IMR-90 (cell line): ENCODE measurements at regions of chr7 and their contacts with region 1.

Region 1: DNA sequence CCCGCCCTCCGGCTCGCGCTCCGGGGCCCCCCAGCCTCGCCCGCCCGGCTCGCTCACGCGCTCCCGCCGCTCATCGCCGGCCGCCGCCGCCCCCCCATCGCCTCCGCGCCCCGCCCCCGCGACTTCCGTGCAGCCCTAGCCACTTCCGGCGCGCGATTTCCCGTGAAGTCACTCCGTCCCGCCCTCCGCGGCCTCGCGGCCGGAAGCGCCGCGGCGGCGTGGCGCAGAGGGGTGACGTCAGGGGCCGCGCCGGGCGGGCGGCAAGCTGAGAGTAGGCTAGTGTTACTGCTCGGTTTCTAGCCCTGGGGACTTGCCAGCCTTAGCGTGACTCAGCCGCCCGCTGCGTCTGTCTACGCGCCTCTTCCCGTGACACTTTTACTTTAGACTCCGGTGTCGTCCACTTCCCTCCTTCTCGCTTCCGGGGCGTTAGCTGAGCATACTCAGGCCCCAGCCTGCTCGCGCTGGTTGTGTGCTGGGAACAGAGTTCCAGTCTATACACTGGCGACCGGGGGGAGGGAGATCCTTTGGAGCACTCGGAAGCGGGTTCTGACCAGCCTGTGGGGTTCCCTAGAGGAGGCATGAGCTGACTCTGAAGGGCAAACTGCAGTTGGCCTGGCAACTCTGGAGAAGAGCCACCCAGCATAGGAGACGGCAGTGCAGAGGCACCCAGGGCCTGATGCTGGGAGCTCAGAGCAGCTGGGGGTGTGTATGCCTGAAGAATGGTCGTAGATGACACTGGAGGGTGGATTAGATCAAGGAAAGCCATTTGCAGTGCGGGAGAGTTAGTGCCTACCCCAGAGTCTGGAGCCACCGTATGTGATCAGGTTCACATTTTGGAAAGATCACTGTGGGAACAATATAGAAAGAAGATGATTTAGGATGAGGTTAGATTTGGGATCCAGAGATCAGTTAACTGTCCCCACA is at the start of gene PURB:
- DNase-seq: peak; percentile 98
- ATAC-seq: peak; percentile 85
- H3K4me3 ChIP-seq: peak within 1 kb of the TSS; percentile 94
- H3K27ac ChIP-seq: peak within 1 kb of the TSS; percentile 91
- H3K4me1 ChIP-seq: peaks cover 7% of the 10 kb centered on the region; the same call in 1 of the 2 replicates
- H3K27me3 ChIP-seq: no peaks in the 10 kb centered on the region
- CTCF ChIP-seq: no peak
- POLR2A ChIP-seq: peak; percentile 90
- RAD21 ChIP-seq: no peak
- total RNA-seq, gene PURB: 8.8 and 15.3 TPM in 2 replicates

Region 2: GRCh38 chr7:44606450-44607254 is 279.0 kb before region 1 on chr7 and contains the start of gene OGDH:
- CTCF ChIA-PET with region 1: no interaction called
- POLR2A ChIA-PET with region 1: no interaction called
- dilution Hi-C with region 1: no loop called
- in situ Hi-C with region 1: no loop called
- intact Hi-C with region 1: loop called (anchors 1 kb)
- DNase-seq: peak; percentile 99
- ATAC-seq: peak; percentile 99
- H3K4me3 ChIP-seq: peak within 1 kb of the TSS; percentile 85
- H3K27ac ChIP-seq: peak within 1 kb of the TSS; percentile 85
- H3K4me1 ChIP-seq: no peaks in the 10 kb centered on the region
- H3K27me3 ChIP-seq: no peaks in the 10 kb centered on the region
- CTCF ChIP-seq: no peak
- POLR2A ChIP-seq: peak; percentile 91
- RAD21 ChIP-seq: no peak
- total RNA-seq, gene OGDH: 52.8 and 56.5 TPM in 2 replicates

Region 3: DNA sequence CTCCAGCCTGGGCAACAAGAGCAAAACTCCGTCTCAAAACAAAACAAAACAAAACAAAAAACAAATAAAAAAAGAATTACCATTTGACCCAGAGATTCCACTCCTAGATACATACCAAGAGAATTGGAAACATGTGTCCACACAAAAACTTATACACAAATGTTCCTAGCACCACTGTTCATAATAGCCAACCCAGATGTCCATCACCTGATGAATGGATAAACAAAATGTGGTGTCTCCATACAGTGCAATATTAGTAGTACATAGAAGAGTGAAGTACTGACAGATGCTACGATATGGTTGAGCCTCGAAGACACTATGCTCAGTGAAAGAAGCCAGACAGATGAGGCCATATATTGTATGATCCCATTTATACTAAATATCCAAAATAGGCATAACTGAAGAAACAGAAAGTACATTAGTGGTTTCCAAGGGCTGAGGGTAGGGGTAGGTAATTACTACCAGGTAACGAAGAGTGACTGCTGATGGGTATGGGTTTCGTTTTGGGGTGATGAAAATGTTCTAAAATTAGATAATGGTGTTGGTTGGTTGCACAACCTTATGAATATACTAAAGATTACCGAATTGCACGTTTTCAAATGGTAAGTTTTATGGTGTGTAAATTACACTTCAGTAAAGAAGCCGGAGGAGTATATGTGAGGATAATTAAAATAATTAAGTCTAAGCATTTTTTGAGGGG is 73.1 kb after region 1 on chr7:
- CTCF ChIA-PET with region 1: no interaction called
- POLR2A ChIA-PET with region 1: no interaction called
- dilution Hi-C with region 1: no loop called
- in situ Hi-C with region 1: no loop called
- intact Hi-C with region 1: no loop called
- DNase-seq: no peak
- ATAC-seq: no peak
- H3K4me3 ChIP-seq: no peak overlapping the region
- H3K27ac ChIP-seq: no peak overlapping the region
- H3K4me1 ChIP-seq: peaks cover 5% of the 10 kb centered on the region; the same call in 1 of the 2 replicates
- H3K27me3 ChIP-seq: peaks cover 24% of the 10 kb centered on the region
- CTCF ChIP-seq: no peak
- POLR2A ChIP-seq: no peak
- RAD21 ChIP-seq: no peak

Region 4: DNA sequence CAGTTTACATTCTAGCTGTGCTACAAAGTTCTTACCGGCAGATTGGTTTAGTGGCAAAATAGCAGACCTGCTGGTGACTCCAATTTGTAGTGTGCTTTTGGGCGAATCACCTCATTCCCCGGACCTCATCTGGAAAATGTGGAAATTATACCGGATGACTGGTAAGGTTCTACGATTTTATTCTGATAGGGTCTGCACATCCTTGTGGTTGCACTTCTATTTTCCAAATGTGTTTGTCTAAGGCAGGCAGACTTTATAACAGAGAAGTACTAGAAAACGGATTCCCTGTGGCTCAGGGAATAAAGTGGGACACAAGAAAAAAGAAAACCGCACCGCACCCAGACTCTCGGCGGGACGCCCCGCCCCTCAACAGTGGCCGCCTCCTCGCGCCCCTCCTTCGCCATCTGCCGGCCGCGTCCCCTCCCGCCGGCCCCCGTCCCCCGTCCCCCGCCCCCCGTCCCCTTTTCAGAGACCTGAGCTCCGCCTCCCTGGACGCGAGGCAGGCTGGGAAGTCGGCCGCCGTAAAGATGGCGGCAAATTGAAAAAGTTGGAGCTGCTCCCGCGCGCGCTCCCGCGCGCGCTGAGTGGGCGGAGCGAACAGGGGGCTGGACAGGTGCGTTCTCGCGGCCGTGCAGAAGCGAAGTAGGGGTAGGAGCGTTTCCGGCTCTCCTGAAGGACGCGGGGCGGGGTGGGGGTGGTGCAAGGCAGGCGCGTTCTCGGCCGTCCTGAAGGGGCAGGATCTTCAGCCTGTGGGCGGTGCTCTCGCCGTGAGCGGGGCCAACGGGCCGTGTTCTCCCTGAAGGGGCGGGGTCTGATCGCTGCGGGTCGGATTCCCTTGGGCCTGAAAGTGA is 113.8 kb after region 1 on chr7:
- CTCF ChIA-PET with region 1: no interaction called
- POLR2A ChIA-PET with region 1: interaction called, 4 read pairs
- dilution Hi-C with region 1: no loop called
- in situ Hi-C with region 1: no loop called
- intact Hi-C with region 1: loop called (anchors 1 kb)
- DNase-seq: peak; percentile 99
- ATAC-seq: peak; percentile 95
- H3K4me3 ChIP-seq: peak overlapping the region; percentile 88
- H3K27ac ChIP-seq: peak overlapping the region; percentile 81
- H3K4me1 ChIP-seq: peaks cover 5% of the 10 kb centered on the region
- H3K27me3 ChIP-seq: no peaks in the 10 kb centered on the region
- CTCF ChIP-seq: no peak
- POLR2A ChIP-seq: no peak
- RAD21 ChIP-seq: peak; percentile 2; the same call in 1 of the 2 replicates

Region 5: DNA sequence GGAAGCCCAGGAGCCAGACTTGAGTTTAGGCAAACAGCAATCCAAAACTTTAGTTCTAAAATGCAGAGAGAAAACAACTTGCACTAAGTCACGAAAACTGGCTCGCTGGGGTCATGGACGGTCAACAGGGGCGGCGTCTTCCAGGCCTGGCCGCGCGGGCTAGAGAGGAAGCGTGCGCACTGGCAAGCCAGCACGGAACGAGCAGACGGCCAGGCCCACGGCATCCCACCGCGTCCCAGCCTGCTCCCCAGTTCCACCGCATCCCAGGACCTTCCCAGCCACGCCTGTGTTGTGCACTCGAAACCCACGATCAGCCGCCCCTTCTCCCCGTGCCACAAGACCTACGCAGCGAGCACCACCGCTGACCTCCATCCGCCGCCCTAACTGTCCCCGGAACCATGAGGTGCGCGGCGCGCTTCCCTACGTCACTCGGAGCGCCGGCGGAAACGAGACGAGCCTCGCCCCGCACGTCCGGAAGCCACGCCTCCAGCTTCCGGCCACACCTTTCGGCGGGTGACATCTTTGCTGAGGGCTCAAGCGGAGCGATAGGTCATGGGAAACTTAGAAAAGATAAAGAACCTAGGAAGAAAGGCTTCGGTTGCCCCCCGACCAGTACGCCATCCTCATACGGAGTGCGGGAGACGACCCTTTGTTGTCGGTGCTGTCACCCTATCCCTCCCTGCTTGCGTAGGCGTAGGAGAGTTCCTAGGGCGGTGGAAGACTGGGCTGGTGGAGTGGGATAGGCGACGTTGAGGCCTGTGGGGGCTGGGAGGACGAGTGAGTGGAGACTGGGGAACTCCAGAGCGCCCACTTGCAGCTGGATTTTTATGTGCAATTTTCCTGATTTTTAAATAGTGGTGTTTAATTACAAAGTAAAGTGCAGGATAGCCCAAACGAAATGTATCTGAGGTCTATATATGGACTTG is 225.9 kb after region 1 on chr7 and contains the start of gene TBRG4:
- CTCF ChIA-PET with region 1: no interaction called
- POLR2A ChIA-PET with region 1: no interaction called
- dilution Hi-C with region 1: no loop called
- in situ Hi-C with region 1: no loop called
- intact Hi-C with region 1: loop called (anchors 5 kb)
- DNase-seq: peak; percentile 91
- ATAC-seq: peak; percentile 95
- H3K4me3 ChIP-seq: peak within 1 kb of the TSS; percentile 86
- H3K27ac ChIP-seq: peak within 1 kb of the TSS; percentile 90
- H3K4me1 ChIP-seq: peaks cover 3% of the 10 kb centered on the region; the same call in 1 of the 2 replicates
- H3K27me3 ChIP-seq: peaks cover 6% of the 10 kb centered on the region
- CTCF ChIP-seq: peak; percentile 44
- POLR2A ChIP-seq: peak; percentile 90
- RAD21 ChIP-seq: peak; percentile 23; the same call in 1 of the 2 replicates
- total RNA-seq, gene TBRG4: 56.7 and 77.6 TPM in 2 replicates